ENCODE measurements at regions of chr14 and their contacts with region 1.

Region 1: GRCh38 chr14:55136885-55137786 is 8.1 kb downstream of the LGALS3 start:
- DNase-seq: peak in 6 of 7 donors; percentile 59 to 80 (median 61)
- H3K4me3 ChIP-seq: peak overlapping the region in 1 of 4 donors; percentile 17
- H3K27ac ChIP-seq: peak overlapping the region in 2 of 5 donors; percentile 23 to 64
- H3K4me1 ChIP-seq: peaks cover 3 to 10% of the 10 kb centered on the region in 2 donors
- H3K27me3 ChIP-seq: no peaks in the 10 kb centered on the region
- CTCF ChIP-seq: no peak
- POLR2A ChIP-seq: no peak

Region 2: GRCh38 chr14:55102141-55102621 is 35.0 kb before region 1 on chr14:
- intact Hi-C with region 1: loop called in 1 of 2 experiments (anchors 5 kb)
- DNase-seq: peak in 6 of 7 donors; percentile 41 to 81 (median 53)
- H3K4me3 ChIP-seq: no peak overlapping the region
- H3K27ac ChIP-seq: peak overlapping the region in 4 of 5 donors; percentile 79 to 92 (median 84)
- H3K4me1 ChIP-seq: peaks cover 13 to 56% of the 10 kb centered on the region in 2 donors
- H3K27me3 ChIP-seq: no peaks in the 10 kb centered on the region
- CTCF ChIP-seq: no peak
- POLR2A ChIP-seq: no peak